BJ (cell line): ENCODE measurements at regions of chr7 and their contacts with region 1.

Region 1: GRCh38 chr7:40192036-40192435 is 57.2 kb downstream of the SUGCT start:
- DNase-seq: no peak
- H3K4me3 ChIP-seq: no peak overlapping the region
- H3K27me3 ChIP-seq: no peaks in the 10 kb centered on the region
- CTCF ChIP-seq: no peak

Region 2: DNA sequence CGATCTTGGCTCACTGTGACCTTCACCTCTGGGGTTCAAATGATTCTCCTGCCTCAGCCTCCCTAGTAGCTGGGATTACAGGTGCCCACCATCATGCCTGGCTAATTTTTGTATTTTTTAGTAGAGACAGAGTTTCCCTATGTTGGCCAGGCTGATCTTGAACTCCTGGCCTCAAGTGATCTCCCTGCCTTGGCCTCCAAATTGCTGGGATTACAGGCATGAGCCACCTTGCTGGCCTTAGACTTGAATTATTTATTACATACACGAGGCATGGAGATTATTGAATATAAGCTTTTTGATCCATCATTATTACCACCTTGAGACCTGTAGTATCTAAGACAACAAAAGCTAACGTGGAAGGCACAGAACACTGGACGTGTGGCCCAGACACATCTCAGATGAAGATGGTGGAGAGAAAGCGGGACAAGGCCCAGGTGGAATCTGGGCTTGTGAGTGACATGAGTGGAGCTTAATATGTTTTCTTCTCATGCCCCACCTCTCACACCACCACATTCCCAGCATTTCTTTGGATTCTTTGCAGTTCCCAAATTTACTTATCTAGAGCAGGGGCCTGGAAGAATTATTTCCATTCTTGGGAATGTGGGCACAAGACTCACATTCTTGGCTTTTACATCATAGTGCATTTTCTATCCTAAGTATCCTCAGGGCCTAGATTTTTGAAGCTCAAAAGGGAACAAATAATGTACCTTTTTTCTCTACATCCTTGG is 19.4 kb after region 1 on chr7:
- CTCF ChIA-PET with region 1: no interaction called
- POLR2A ChIA-PET with region 1: interaction called, 25 read pairs
- DNase-seq: no peak
- H3K4me3 ChIP-seq: no peak overlapping the region
- H3K27me3 ChIP-seq: no peaks in the 10 kb centered on the region
- CTCF ChIP-seq: no peak